ENCODE measurements at regions of chr3 and their contacts with region 1.

Region 1: DNA sequence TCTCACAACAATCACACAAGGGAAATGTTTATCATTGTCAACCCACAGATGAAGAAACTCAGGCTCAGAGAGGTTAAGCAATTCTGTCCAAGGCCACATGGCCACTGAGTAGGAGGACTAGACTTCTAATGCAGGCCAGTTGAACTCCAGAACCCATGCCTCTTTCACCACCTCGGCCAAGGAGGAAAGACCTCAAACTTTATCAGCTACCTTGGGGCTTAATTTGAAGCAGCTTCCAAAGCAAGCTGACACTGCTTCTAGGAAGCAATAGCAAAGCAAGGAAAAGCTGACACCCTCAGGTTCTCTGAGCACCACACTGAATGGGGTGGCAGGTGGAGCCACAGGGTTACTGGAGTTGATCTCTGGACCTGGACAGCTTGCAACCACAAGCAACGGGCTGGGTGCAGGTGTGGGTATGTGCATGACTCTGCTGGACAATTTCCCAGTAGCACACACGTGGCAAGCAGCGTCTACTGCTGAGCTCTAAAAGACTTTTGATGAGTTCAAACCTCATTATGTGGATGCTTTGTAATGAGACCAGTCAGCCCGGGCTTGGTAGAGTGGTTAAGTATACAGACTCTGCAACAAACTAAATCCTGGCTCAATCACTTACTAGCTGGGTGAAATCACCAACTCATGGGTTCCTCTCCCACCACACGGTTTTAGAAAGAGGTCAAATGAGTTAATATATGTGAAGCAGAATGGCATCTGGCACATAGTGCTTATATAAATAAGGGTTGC is 23.1 kb downstream of the CCNL1 start:
- DNase-seq: no peak
- ATAC-seq: peak; percentile 27
- H3K4me3 ChIP-seq: no peak overlapping the region
- H3K4me3 Mint-ChIP-seq: no peak overlapping the region
- H3K27ac ChIP-seq: no peak overlapping the region
- H3K27ac Mint-ChIP-seq: peak overlapping the region; percentile 74
- H3K4me1 ChIP-seq: peaks cover 47% of the 10 kb centered on the region
- H3K4me1 Mint-ChIP-seq: peaks cover 29% of the 10 kb centered on the region
- H3K27me3 ChIP-seq: no peaks in the 10 kb centered on the region
- H3K27me3 Mint-ChIP-seq: no peaks in the 10 kb centered on the region
- CTCF ChIP-seq: no peak

Region 2: GRCh38 chr3:155995525-155996351 is 1141.1 kb before region 1 on chr3:
- CTCF ChIA-PET with region 1: no interaction called
- POLR2A ChIA-PET with region 1: no interaction called
- intact Hi-C with region 1: loop called in 1 of 2 experiments (anchors 5 kb)
- DNase-seq: peak in 3 of 14 experiments; percentile 15 to 23 (median 23)
- ATAC-seq: no peak
- H3K4me3 ChIP-seq: no peak overlapping the region
- H3K4me3 Mint-ChIP-seq: no peak overlapping the region
- H3K27ac ChIP-seq: no peak overlapping the region
- H3K27ac Mint-ChIP-seq: no peak overlapping the region
- H3K4me1 ChIP-seq: no peaks in the 10 kb centered on the region
- H3K4me1 Mint-ChIP-seq: no peaks in the 10 kb centered on the region
- H3K27me3 ChIP-seq: no peaks in the 10 kb centered on the region
- H3K27me3 Mint-ChIP-seq: no peaks in the 10 kb centered on the region
- CTCF ChIP-seq: peak; percentile 7

Region 3: DNA sequence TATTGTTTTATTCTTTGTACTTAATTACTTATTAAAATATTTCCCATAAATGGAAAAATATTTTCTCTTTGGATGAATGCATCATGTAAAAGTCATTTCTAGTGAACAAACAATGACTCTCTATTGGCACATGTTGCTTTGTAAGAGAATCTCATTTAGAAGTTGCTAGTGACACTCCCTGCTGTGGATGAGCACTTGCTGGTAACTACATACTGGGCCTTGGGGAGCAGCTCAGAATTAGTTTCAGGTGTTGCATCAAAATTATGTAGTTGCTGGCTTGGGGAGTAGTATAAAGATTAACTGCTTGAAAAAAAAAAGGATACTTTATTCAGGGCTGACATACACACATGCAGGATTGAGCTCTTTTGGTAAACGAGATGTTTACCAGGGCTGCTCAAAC is 1096.8 kb before region 1 on chr3:
- CTCF ChIA-PET with region 1: no interaction called
- POLR2A ChIA-PET with region 1: no interaction called
- intact Hi-C with region 1: loop called (anchors 5 kb)
- DNase-seq: no peak
- ATAC-seq: no peak
- H3K4me3 ChIP-seq: no peak overlapping the region
- H3K4me3 Mint-ChIP-seq: no peak overlapping the region
- H3K27ac ChIP-seq: no peak overlapping the region
- H3K27ac Mint-ChIP-seq: no peak overlapping the region
- H3K4me1 ChIP-seq: no peaks in the 10 kb centered on the region
- H3K4me1 Mint-ChIP-seq: no peaks in the 10 kb centered on the region
- H3K27me3 ChIP-seq: no peaks in the 10 kb centered on the region
- H3K27me3 Mint-ChIP-seq: peaks cover 3% of the 10 kb centered on the region
- CTCF ChIP-seq: no peak

Region 4: DNA sequence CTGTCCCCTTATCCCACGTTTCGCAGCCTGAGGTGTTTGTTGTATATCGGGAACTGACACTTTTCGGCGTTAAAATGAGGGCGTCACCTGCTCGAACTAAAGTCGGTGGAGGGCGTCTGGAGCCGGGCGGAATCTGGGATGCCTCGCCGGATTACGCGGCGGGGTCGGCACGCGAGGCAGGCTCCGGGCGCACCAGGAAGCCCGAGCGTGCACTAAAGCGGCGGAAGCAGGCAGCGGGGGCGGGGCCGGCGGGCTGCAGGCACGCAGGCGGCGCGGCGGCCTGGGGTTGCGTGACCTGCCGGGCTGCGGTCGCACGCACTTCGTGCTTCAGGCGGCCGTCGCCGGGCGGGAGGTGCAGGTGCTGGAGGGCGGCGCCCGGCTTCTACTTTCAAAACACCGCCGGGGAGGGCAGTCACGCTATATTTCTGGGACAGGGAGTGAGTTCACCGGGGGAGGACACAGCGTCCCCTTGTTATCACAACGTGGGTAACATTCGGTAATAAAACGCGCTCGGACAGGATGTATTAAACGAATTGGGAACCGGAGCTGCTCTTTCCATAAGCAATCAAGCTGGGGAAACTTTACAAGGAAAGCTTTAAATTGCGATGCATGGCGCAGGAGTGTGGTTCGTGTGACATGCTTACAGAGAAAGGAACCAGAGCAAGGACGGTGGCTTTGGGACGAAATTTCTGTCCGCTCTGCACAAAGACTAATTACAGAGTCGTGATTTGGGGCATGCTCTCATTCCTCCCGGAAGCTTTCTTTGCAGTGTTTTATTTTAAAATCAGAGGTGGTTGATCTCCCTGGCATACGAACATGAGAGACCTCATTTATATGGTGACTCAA is 319.8 kb before region 1 on chr3:
- CTCF ChIA-PET with region 1: interaction called, 4 read pairs
- POLR2A ChIA-PET with region 1: no interaction called
- intact Hi-C with region 1: loop called in 1 of 2 experiments (anchors 5 kb)
- DNase-seq: peak; percentile 66 to 97 (median 84)
- ATAC-seq: peak; percentile 81
- H3K4me3 ChIP-seq: peak overlapping the region; percentile 74
- H3K4me3 Mint-ChIP-seq: peak overlapping the region; percentile 93
- H3K27ac ChIP-seq: peak overlapping the region; percentile 65 to 74
- H3K27ac Mint-ChIP-seq: peak overlapping the region; percentile 89
- H3K4me1 ChIP-seq: peaks cover 24% of the 10 kb centered on the region
- H3K4me1 Mint-ChIP-seq: peaks cover 38% of the 10 kb centered on the region
- H3K27me3 ChIP-seq: no peaks in the 10 kb centered on the region
- H3K27me3 Mint-ChIP-seq: no peaks in the 10 kb centered on the region
- CTCF ChIP-seq: no peak

Region 5: DNA sequence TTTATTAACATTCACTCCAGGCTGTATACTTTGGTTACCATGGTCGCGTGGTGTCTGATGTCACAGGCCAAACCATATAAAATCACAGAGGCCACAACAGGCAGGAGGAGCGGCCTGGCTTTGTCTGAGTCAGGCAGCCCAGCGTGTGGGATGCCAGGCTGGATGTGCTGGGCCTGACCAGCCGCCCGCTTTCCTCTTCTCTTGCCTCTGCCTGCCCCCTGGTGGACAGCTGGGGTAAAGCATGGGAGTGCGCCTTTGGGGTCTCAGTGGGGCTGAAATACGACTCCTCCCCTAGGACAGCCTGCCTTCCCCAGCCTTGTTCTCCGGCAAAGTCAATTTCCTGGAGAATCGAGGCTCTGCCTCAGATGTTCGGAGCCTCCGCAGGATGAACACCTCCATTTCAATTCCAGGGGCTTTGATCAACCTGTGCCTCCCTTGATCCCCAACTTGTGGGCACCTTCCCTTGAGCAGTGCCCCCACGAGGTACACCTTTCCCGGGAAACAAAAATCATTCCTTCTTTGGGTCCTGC is 55.1 kb before region 1 on chr3:
- CTCF ChIA-PET with region 1: interaction called, 24 read pairs
- POLR2A ChIA-PET with region 1: no interaction called
- intact Hi-C with region 1: no loop called
- DNase-seq: peak; percentile 76 to 93 (median 81)
- ATAC-seq: peak; percentile 93
- H3K4me3 ChIP-seq: no peak overlapping the region
- H3K4me3 Mint-ChIP-seq: no peak overlapping the region
- H3K27ac ChIP-seq: peak overlapping the region in 1 of 2 donors; percentile 25
- H3K27ac Mint-ChIP-seq: peak overlapping the region; percentile 64
- H3K4me1 ChIP-seq: peaks cover 14% of the 10 kb centered on the region
- H3K4me1 Mint-ChIP-seq: peaks cover 17% of the 10 kb centered on the region
- H3K27me3 ChIP-seq: no peaks in the 10 kb centered on the region
- H3K27me3 Mint-ChIP-seq: no peaks in the 10 kb centered on the region
- CTCF ChIP-seq: peak; percentile 98

Region 6: GRCh38 chr3:157088601-157089454 is 48.0 kb before region 1 on chr3:
- CTCF ChIA-PET with region 1: interaction called, 20 read pairs
- POLR2A ChIA-PET with region 1: interaction called, 42 read pairs
- intact Hi-C with region 1: no loop called
- DNase-seq: peak; percentile 88 to 97 (median 92)
- ATAC-seq: peak; percentile 83
- H3K4me3 ChIP-seq: peak overlapping the region; percentile 71
- H3K4me3 Mint-ChIP-seq: peak overlapping the region; percentile 90
- H3K27ac ChIP-seq: peak overlapping the region; percentile 92 to 93
- H3K27ac Mint-ChIP-seq: peak overlapping the region; percentile 99
- H3K4me1 ChIP-seq: peaks cover 31% of the 10 kb centered on the region
- H3K4me1 Mint-ChIP-seq: peaks cover 20% of the 10 kb centered on the region
- H3K27me3 ChIP-seq: no peaks in the 10 kb centered on the region
- H3K27me3 Mint-ChIP-seq: no peaks in the 10 kb centered on the region
- CTCF ChIP-seq: peak; percentile 14

Region 7: DNA sequence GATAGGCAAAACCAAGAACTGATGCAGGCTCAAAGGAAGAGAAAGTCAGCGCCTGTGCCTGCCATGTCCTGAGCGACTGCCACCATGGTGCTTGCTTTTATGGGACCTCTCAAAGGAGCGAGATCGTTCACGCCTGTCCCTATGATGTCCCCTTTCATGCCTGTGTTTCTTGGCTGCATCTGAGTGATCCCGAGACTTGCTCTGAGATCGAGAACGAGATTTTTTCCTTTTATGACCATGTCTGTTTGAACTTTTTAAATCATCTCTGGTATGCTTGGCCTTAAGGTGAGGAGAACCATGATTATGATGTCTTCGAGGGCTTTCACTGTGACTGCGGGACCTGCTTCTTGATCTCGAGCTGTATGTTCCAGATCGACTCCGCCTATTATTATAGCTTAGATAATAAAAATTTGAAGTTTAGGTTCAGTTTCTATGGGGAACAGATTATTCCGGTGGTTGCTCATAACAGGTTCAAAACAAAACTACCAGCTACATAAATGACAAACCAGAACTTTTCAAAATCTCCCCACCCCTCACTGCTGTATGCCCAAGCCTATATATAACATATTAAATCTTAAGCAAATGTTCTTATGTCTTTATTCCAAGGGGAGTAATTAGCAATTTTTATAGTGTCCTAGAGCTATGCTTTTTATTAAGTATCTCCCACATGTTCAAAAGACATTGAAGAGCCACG is 11.5 kb after region 1 on chr3:
- CTCF ChIA-PET with region 1: interaction called, 16 read pairs
- POLR2A ChIA-PET with region 1: interaction called, 5 read pairs
- intact Hi-C with region 1: no loop called
- DNase-seq: peak in 1 of 14 experiments; percentile 22
- ATAC-seq: peak; percentile 32
- H3K4me3 ChIP-seq: no peak overlapping the region
- H3K4me3 Mint-ChIP-seq: no peak overlapping the region
- H3K27ac ChIP-seq: no peak overlapping the region
- H3K27ac Mint-ChIP-seq: peak overlapping the region; percentile 81
- H3K4me1 ChIP-seq: no peaks in the 10 kb centered on the region
- H3K4me1 Mint-ChIP-seq: peaks cover 58% of the 10 kb centered on the region
- H3K27me3 ChIP-seq: no peaks in the 10 kb centered on the region
- H3K27me3 Mint-ChIP-seq: no peaks in the 10 kb centered on the region
- CTCF ChIP-seq: no peak